ENCODE measurements at regions of chr1 and their contacts with region 1.

Region 1: GRCh38 chr1:36411674-36412520 is 14.2 kb upstream of the LSM10 start:
- DNase-seq: no peak
- H3K4me3 ChIP-seq: no peak overlapping the region
- H3K27ac ChIP-seq: no peak overlapping the region
- H3K27me3 ChIP-seq: no peaks in the 10 kb centered on the region
- CTCF ChIP-seq: no peak

Region 2: DNA sequence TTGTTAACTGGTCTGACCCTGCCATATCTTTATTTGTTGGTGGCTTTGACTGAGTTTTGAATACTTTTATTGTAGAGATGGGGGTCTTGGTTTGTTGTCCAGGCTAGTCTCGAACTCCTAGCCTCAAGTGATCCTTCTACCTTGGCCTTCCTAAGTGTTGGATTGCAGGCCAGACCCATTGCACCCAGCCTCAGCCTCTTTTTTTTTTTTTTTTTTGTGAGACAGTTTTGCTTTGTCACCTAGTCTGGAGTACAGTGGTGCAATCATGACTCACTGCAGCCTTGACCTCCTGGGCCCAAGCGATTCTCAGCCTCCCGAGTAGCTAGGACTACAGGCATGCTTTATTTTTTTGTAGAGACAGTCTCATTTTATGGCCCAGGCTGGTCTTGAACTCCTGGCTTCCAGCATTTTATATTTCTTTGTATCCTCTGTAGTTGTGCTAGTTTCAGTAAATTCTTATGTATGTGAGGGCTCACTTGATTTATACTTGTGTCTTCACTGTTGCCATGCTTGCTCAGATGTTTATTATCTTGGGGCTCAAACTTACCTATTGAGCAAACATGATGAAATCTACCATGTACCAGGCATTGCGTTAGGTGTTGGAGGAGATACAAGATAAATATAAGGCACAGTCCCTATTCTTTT is 163.5 kb before region 1 on chr1:
- CTCF ChIA-PET with region 1: no interaction called
- POLR2A ChIA-PET with region 1: interaction called, 10 read pairs
- DNase-seq: peak; percentile 50
- H3K4me3 ChIP-seq: no peak overlapping the region
- H3K27ac ChIP-seq: peak overlapping the region; percentile 78
- H3K27me3 ChIP-seq: no peaks in the 10 kb centered on the region
- CTCF ChIP-seq: no peak

Region 3: GRCh38 chr1:36279110-36279788 is 132.6 kb before region 1 on chr1:
- CTCF ChIA-PET with region 1: no interaction called
- POLR2A ChIA-PET with region 1: no interaction called
- DNase-seq: no peak
- H3K4me3 ChIP-seq: no peak overlapping the region
- H3K27ac ChIP-seq: no peak overlapping the region
- H3K27me3 ChIP-seq: no peaks in the 10 kb centered on the region
- CTCF ChIP-seq: no peak

Region 4: GRCh38 chr1:36492504-36492903 is 80.6 kb after region 1 on chr1:
- CTCF ChIA-PET with region 1: no interaction called
- POLR2A ChIA-PET with region 1: no interaction called
- DNase-seq: no peak
- H3K4me3 ChIP-seq: no peak overlapping the region
- H3K27ac ChIP-seq: no peak overlapping the region
- H3K27me3 ChIP-seq: peaks cover 19% of the 10 kb centered on the region
- CTCF ChIP-seq: no peak

Measured in AG04450 (cell line).